ENCODE measurements at regions of chr7 and their contacts with region 1.

Region 1: GRCh38 chr7:116525913-116526861 is 1.4 kb downstream of the CAV1 start:
- DNase-seq: no peak
- ATAC-seq: peak; percentile 68
- H3K4me3 ChIP-seq: peak overlapping the region; percentile 84 to 89
- H3K27ac ChIP-seq: peak overlapping the region; percentile 100
- H3K4me1 ChIP-seq: peaks cover 47 to 79% of the 10 kb centered on the region in 2 experiments
- H3K27me3 ChIP-seq: no peaks in the 10 kb centered on the region
- CTCF ChIP-seq: peak in 2 of 3 experiments; percentile 68 to 78; a peak in 4 of 6 replicates
- POLR2A ChIP-seq: peak; percentile 67
- RAD21 ChIP-seq: no peak

Region 2: DNA sequence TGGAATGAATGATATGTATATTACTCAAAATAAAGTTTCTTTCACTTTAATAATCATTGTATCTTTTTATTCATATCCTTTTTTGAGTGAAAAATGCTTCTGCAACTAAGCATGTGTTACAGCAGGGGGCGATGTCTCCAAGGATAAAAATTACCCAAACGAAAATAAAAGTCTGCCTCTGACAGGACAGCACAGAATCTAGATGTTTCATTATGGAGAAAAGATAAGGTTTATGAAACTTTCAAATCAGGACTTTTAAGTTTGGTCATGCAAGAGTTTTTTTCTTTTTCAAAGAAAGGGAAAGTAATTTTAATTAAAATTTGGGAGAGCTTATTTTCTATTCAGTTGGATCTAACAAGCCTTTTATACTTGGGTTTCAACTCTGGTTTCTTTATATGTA is 267.5 kb before region 1 on chr7:
- CTCF ChIA-PET with region 1: interaction called, 15 read pairs
- POLR2A ChIA-PET with region 1: interaction called, 6 read pairs
- RAD21 ChIA-PET with region 1: no interaction called
- intact Hi-C with region 1: loop called (anchors 1 kb)
- DNase-seq: peak; percentile 48
- ATAC-seq: no peak
- H3K4me3 ChIP-seq: no peak overlapping the region
- H3K27ac ChIP-seq: peak overlapping the region; percentile 74; the same call in 1 of the 2 replicates
- H3K4me1 ChIP-seq: peaks cover 43 to 58% of the 10 kb centered on the region in 2 experiments
- H3K27me3 ChIP-seq: no peaks in the 10 kb centered on the region
- CTCF ChIP-seq: peak; percentile 57 to 91 (median 81)
- POLR2A ChIP-seq: no peak
- RAD21 ChIP-seq: peak; percentile 96

Region 3: GRCh38 chr7:116443101-116443523 is 83.1 kb before region 1 on chr7:
- CTCF ChIA-PET with region 1: interaction called, 10 read pairs
- POLR2A ChIA-PET with region 1: interaction called, 9 read pairs
- RAD21 ChIA-PET with region 1: interaction called in 1 of 2 experiments, 6 read pairs
- intact Hi-C with region 1: loop called (anchors 1 kb)
- DNase-seq: peak; percentile 97
- ATAC-seq: peak; percentile 72
- H3K4me3 ChIP-seq: peak overlapping the region; percentile 36 to 56; a peak in 3 of 4 replicates
- H3K27ac ChIP-seq: peak overlapping the region; percentile 97
- H3K4me1 ChIP-seq: peaks cover 59 to 97% of the 10 kb centered on the region in 2 experiments
- H3K27me3 ChIP-seq: no peaks in the 10 kb centered on the region
- CTCF ChIP-seq: no peak
- POLR2A ChIP-seq: no peak
- RAD21 ChIP-seq: peak; percentile 48

Region 4: GRCh38 chr7:116499168-116500077 is 26.8 kb before region 1 on chr7 and contains the start of gene CAV2:
- CTCF ChIA-PET with region 1: interaction called, 4 read pairs
- POLR2A ChIA-PET with region 1: interaction called, 4 read pairs
- RAD21 ChIA-PET with region 1: interaction called, 3 to 6 read pairs
- intact Hi-C with region 1: loop called (anchors 1 kb)
- DNase-seq: peak; percentile 74
- ATAC-seq: peak; percentile 81
- H3K4me3 ChIP-seq: peak within 1 kb of the TSS; percentile 73 to 95
- H3K27ac ChIP-seq: peak within 1 kb of the TSS; percentile 98
- H3K4me1 ChIP-seq: peaks cover 23 to 64% of the 10 kb centered on the region in 2 experiments
- H3K27me3 ChIP-seq: no peaks in the 10 kb centered on the region
- CTCF ChIP-seq: no peak
- POLR2A ChIP-seq: peak; percentile 20
- RAD21 ChIP-seq: peak; percentile 36; the same call in 1 of the 2 replicates
- total RNA-seq, gene CAV2: 157 TPM

Region 5: GRCh38 chr7:116588641-116589594 is 62.7 kb after region 1 on chr7:
- CTCF ChIA-PET with region 1: interaction called, 13 read pairs
- POLR2A ChIA-PET with region 1: interaction called, 6 read pairs
- RAD21 ChIA-PET with region 1: no interaction called
- intact Hi-C with region 1: loop called (anchors 5 kb)
- DNase-seq: peak; percentile 44
- ATAC-seq: peak; percentile 60
- H3K4me3 ChIP-seq: no peak overlapping the region
- H3K27ac ChIP-seq: peak overlapping the region; percentile 44; the same call in 1 of the 2 replicates
- H3K4me1 ChIP-seq: peaks cover 10 to 37% of the 10 kb centered on the region in 2 experiments; a peak in 3 of 4 replicates
- H3K27me3 ChIP-seq: no peaks in the 10 kb centered on the region
- CTCF ChIP-seq: peak; percentile 42 to 88 (median 70)
- POLR2A ChIP-seq: no peak
- RAD21 ChIP-seq: peak; percentile 93

Region 6: DNA sequence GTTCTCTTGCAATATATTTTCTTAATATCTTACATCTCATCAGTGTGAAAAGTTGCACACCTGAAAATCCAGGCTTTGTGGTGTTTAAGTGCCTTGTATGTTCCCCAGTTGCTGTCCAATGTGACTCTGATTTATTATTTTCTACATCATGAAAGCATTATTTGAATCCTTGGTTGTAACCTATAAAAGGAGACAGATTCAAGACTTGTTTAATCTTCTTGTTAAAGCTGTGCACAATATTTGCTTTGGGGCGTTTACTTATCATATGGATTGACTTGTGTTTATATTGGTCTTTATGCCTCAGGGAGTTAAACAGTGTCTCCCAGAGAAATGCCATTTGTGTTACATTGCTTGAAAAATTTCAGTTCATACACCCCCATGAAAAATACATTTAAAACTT is 983.5 kb after region 1 on chr7:
- CTCF ChIA-PET with region 1: no interaction called
- POLR2A ChIA-PET with region 1: no interaction called
- RAD21 ChIA-PET with region 1: no interaction called
- intact Hi-C with region 1: no loop called
- DNase-seq: no peak
- ATAC-seq: no peak
- H3K4me3 ChIP-seq: no peak overlapping the region
- H3K27ac ChIP-seq: no peak overlapping the region
- H3K4me1 ChIP-seq: no peaks in the 10 kb centered on the region
- H3K27me3 ChIP-seq: no peaks in the 10 kb centered on the region
- CTCF ChIP-seq: no peak
- POLR2A ChIP-seq: no peak
- RAD21 ChIP-seq: no peak

Measured in HCT116 (cell line).